Activated CD8-positive, alpha-beta memory T cell treated with anti-CD3 and anti-CD28 coated beads, Interleukin-2, amount 10 ng/mL, durations not matched to agents 7 days and 5 days (primary cell): ENCODE measurements at regions of chr2 and their contacts with region 1.

Region 1: GRCh38 chr2:134245340-134245984 is 8.4 kb upstream of the MGAT5 start:
- DNase-seq: peak; percentile 82
- ATAC-seq: peak; percentile 59
- H3K4me3 Mint-ChIP-seq: no peak overlapping the region
- H3K27ac Mint-ChIP-seq: peak overlapping the region; percentile 41
- H3K4me1 Mint-ChIP-seq: peaks cover 67% of the 10 kb centered on the region
- H3K27me3 Mint-ChIP-seq: peaks cover 39% of the 10 kb centered on the region

Region 2: GRCh38 chr2:134127496-134127895 is 118.0 kb before region 1 on chr2:
- CTCF ChIA-PET with region 1: interaction called, 17 read pairs
- DNase-seq: peak; percentile 71
- ATAC-seq: peak; percentile 86
- H3K4me3 Mint-ChIP-seq: no peak overlapping the region
- H3K27ac Mint-ChIP-seq: no peak overlapping the region
- H3K4me1 Mint-ChIP-seq: peaks cover 52% of the 10 kb centered on the region
- H3K27me3 Mint-ChIP-seq: no peaks in the 10 kb centered on the region

Region 3: DNA sequence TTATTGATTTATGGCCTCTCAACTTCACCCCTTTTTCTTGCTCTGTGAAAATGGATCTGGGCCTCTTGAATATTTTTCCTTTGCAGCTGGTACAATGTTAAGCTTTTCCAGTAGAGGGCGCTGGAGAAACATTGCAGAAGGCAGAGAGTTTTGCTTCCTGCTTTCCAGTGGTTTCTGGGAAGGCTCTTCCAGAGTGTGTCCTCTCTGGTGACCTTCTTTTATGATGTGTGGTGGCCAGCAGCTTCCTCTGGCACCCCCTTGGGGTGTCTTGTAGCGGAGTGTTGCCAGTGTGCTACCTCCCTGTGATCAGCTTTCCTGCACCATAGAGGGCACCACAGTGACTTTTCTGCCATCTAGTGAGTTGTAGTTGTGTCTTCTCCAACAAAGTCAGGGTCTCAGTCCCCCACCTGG is 17.0 kb before region 1 on chr2:
- CTCF ChIA-PET with region 1: interaction called, 39 read pairs
- DNase-seq: no peak
- ATAC-seq: no peak
- H3K4me3 Mint-ChIP-seq: no peak overlapping the region
- H3K27ac Mint-ChIP-seq: no peak overlapping the region
- H3K4me1 Mint-ChIP-seq: peaks cover 47% of the 10 kb centered on the region
- H3K27me3 Mint-ChIP-seq: no peaks in the 10 kb centered on the region

Region 4: GRCh38 chr2:134261398-134262131 is 16.1 kb after region 1 on chr2:
- CTCF ChIA-PET with region 1: interaction called, 14 read pairs
- DNase-seq: no peak
- ATAC-seq: no peak
- H3K4me3 Mint-ChIP-seq: no peak overlapping the region
- H3K27ac Mint-ChIP-seq: no peak overlapping the region
- H3K4me1 Mint-ChIP-seq: peaks cover 56% of the 10 kb centered on the region
- H3K27me3 Mint-ChIP-seq: peaks cover 25% of the 10 kb centered on the region

Region 5: GRCh38 chr2:134290358-134290757 is 44.9 kb after region 1 on chr2:
- CTCF ChIA-PET with region 1: interaction called, 15 read pairs
- DNase-seq: peak; percentile 63
- ATAC-seq: peak; percentile 85
- H3K4me3 Mint-ChIP-seq: no peak overlapping the region
- H3K27ac Mint-ChIP-seq: no peak overlapping the region
- H3K4me1 Mint-ChIP-seq: peaks cover 23% of the 10 kb centered on the region
- H3K27me3 Mint-ChIP-seq: peaks cover 17% of the 10 kb centered on the region

Region 6: DNA sequence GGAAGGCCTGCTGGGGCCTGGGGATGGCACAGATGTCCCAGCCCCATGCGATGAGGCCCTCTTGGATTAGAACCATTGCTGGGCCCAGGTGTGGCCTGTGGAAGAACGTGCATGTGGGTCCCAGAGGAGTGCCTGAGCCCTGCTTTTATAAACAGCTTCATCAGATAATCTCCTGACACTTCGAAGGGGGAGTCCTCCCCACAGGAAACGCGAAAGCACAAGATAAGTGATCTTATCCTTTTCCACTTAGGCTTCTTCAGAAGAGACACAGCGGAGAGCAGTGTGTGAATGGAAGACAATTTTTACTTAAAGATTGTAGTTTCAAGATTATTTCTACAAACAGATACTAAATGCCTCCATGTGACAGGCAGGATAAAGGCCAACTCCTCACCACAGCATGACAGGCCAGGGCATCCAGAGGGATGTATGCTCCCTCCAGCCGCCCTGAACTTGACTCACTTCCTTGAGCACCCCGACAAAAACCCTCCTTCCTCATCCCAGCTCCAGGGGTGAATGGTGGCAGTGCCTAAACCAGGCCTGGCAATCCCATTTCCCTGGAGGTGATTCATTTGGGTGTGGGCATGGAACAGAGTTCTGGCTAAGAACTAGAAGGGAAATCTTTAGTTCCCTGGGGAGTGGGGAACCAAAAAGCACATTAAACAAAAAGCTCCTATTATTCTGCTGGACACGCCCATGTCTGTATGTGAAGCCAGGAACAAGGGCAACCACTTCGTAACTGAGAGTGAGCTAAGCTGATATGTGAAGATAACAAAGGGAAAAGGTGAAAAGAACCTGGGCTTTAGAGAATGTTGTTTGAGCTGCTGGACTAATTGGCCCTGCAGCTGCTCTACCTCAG is 529.6 kb after region 1 on chr2:
- CTCF ChIA-PET with region 1: no interaction called
- DNase-seq: no peak
- ATAC-seq: no peak
- H3K4me3 Mint-ChIP-seq: no peak overlapping the region
- H3K27ac Mint-ChIP-seq: no peak overlapping the region
- H3K4me1 Mint-ChIP-seq: no peaks in the 10 kb centered on the region
- H3K27me3 Mint-ChIP-seq: peaks cover 10% of the 10 kb centered on the region